H1 (cell line): ENCODE measurements at regions of chr12 and their contacts with region 1.

Region 1: DNA sequence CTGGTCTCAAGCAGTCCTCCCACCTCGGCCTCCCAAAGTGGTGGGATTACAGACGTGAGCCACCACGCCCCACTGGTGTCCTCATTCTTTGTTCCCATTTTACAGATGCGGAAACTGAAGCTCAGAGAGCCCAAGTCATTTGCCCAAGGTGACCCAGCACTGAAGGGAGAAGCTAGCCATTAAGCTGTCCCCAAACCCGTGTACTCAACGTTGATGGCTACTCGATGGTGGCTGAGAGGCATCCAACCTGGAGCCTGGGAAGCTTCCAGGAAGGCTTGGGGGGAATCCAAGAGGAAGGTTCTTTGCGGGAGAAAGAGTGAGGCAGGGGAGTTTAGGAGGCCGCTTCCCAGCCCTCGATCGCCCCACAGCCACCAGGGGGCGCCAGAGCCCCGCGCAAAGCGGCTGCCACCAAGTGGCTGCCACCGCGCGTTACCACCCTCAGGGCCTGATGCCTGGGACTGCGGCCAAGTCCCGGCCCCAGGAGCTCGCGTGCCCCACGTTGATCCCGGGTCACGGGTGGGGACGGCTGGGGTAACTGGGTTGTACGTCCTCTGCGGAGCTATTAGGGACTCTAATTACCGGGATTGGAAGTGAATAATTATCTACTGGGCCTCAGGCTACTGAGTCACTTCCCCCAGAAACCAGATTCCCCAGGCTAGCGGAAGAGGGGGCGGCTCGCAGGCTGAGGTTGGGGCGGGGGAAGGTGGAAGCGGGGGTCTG is 8.8 kb upstream of the SH2B3 start:
- DNase-seq: peak; percentile 60 to 98
- H3K4me3 ChIP-seq: no peak overlapping the region; a peak in 1 of 8 replicates
- H3K27ac ChIP-seq: no peak overlapping the region
- H3K4me1 ChIP-seq: no peaks in the 10 kb centered on the region
- H3K27me3 ChIP-seq: no peaks in the 10 kb centered on the region
- CTCF ChIP-seq: peak; percentile 92 to 100 (median 96)
- EP300 ChIP-seq: no peak
- POLR2A ChIP-seq: no peak
- RAD21 ChIP-seq: peak; percentile 95 to 97

Region 2: DNA sequence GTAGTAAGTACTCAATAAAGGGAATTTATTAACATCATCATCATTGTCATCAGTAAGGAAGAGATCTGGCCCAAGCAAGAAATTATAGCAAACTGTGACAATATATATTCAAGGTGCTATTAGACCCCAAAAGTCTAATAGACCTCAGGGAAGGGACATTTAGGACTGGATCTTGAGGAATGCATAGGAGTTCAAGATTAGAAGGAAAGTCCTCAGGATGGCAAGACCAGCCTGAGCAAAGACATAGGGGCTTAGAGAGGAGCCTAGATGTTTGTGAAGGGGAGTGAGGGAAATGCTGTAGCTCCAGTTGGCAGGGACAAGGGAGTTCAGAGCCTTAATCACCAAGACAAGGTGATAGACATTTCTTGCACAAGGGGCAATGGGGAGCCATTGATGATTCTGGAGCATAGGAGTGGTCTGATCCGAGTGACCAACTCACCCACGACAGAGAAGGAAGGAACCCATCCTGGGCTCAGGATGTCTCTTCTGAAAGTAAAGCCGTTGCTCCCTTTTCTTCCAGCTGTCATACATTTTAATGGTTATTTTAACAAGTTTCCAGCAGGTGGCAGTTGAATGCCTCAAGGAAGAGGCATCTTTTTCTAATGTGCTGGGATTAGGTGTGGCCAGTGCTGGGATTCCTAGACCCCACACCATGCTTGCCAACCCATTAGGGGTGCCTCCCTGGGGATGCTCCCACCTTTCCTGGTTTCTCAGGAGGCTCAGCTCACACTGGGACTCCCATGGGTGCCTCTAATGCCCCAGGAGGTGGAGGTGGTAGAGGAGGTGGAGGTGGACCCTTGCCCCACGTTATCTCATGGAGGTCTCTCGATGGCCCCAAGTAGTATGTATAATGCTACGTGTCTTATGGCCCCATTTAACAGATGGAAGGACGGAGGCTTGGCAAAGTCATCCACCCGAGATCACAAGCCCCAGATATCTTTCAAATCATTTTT is 65.8 kb before region 1 on chr12:
- CTCF ChIA-PET with region 1: interaction called, 12 read pairs
- POLR2A ChIA-PET with region 1: no interaction called
- DNase-seq: no peak
- H3K4me3 ChIP-seq: no peak overlapping the region
- H3K27ac ChIP-seq: no peak overlapping the region
- H3K4me1 ChIP-seq: peaks cover 0 to 2% (median 0%) of the 10 kb centered on the region in 4 experiments; a peak in 1 of 7 replicates
- H3K27me3 ChIP-seq: no peaks in the 10 kb centered on the region
- CTCF ChIP-seq: peak in 2 of 3 experiments; percentile 53 to 59; a peak in 3 of 4 replicates
- EP300 ChIP-seq: no peak
- POLR2A ChIP-seq: no peak
- RAD21 ChIP-seq: peak; percentile 60 to 71

Region 3: DNA sequence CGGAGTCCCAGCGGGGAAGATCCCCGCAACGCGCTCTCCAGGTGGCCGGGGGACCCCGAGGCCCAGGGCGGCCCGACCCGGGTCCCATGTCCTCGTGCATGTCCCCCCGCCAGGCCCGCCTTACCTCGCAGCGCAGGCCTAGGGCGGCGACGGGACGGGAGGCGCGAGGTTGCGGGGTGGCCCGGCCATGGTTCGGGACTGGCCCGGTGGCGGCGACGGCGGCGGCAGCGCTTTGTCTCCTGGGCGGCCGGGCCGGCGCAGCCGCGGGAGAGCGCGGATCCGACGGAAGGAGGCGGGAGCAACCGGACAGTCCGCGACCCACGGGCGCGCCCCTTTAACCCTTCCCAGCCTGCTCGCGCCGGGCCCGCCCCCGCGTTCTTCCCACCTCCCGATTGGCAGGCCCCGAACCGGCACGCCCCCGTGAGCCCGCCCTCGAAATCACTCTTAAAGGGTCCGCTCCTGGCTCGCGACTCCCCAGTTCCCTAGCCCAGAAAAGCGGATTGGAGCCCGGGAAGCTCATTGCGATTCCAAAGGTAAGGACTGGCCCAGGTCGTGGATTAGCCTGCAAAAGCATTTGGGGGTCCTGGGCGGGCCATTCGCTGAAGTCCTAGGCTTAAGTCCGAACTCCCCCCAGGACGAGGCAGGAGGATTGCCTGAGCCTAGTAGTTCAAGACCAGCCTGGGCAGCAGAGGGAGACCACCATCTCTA is 27.9 kb before region 1 on chr12 and contains the start of gene PHETA1:
- CTCF ChIA-PET with region 1: interaction called, 28 read pairs
- POLR2A ChIA-PET with region 1: interaction called, 5 read pairs
- DNase-seq: peak; percentile 39 to 95
- H3K4me3 ChIP-seq: peak within 1 kb of the TSS; percentile 75 to 83 (median 80)
- H3K27ac ChIP-seq: no peak within 1 kb of the TSS
- H3K4me1 ChIP-seq: peaks cover 0 to 9% (median 3%) of the 10 kb centered on the region in 4 experiments; a peak in 6 of 7 replicates
- H3K27me3 ChIP-seq: peaks cover 0 to 18% (median 7%) of the 10 kb centered on the region in 4 experiments; a peak in 4 of 7 replicates
- CTCF ChIP-seq: no peak
- EP300 ChIP-seq: no peak
- POLR2A ChIP-seq: peak in 1 of 2 experiments; percentile 48; a peak in 1 of 3 replicates
- RAD21 ChIP-seq: no peak
- total RNA-seq, gene PHETA1: 12.3 and 13.7 TPM in 2 replicates

Region 4: GRCh38 chr12:111412007-111412829 is 15.3 kb after region 1 on chr12:
- CTCF ChIA-PET with region 1: interaction called, 50 read pairs
- POLR2A ChIA-PET with region 1: interaction called, 7 read pairs
- DNase-seq: no peak
- H3K4me3 ChIP-seq: no peak overlapping the region
- H3K27ac ChIP-seq: peak overlapping the region; percentile 63; the same call in 1 of the 2 replicates
- H3K4me1 ChIP-seq: peaks cover 31 to 61% (median 45%) of the 10 kb centered on the region in 4 experiments
- H3K27me3 ChIP-seq: no peaks in the 10 kb centered on the region
- CTCF ChIP-seq: no peak
- EP300 ChIP-seq: 0 out of 3 replicates have a peak, but pooled peaks of 1 of the 2 experiments have one; percentile 31
- POLR2A ChIP-seq: no peak
- RAD21 ChIP-seq: no peak

Region 5: DNA sequence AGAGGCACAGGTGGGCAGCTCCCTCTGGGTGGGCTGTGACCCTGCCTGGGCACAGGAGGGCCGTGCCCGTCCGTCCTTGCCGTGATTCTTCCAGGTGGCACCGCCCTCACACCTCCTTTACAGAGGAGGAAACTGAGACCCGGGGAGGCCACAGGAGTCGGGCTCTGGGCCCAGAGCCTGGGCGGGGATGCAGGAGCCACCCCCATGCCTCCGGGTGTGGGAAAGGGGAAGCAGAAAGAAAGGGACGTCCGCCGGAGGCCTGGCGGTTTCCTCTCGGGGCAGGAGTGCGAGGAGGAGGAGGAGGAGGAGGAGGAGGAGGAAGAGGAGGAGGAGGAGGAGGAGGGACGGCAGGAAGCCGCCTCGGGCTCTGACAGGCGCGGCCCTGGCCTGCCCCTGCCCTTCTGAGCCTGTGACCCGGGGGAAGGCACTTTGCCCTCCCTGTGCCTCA is 31.9 kb after region 1 on chr12:
- CTCF ChIA-PET with region 1: interaction called, 838 read pairs
- POLR2A ChIA-PET with region 1: interaction called, 4 read pairs
- DNase-seq: no peak
- H3K4me3 ChIP-seq: no peak overlapping the region
- H3K27ac ChIP-seq: no peak overlapping the region
- H3K4me1 ChIP-seq: peaks cover 4 to 33% (median 20%) of the 10 kb centered on the region in 4 experiments
- H3K27me3 ChIP-seq: no peaks in the 10 kb centered on the region; a peak in 1 of 7 replicates
- CTCF ChIP-seq: no peak
- EP300 ChIP-seq: no peak
- POLR2A ChIP-seq: no peak
- RAD21 ChIP-seq: no peak

Region 6: GRCh38 chr12:111482462-111482861 is 85.6 kb after region 1 on chr12:
- CTCF ChIA-PET with region 1: interaction called, 24 read pairs
- POLR2A ChIA-PET with region 1: interaction called, 3 read pairs
- DNase-seq: no peak
- H3K4me3 ChIP-seq: no peak overlapping the region
- H3K27ac ChIP-seq: no peak overlapping the region
- H3K4me1 ChIP-seq: no peaks in the 10 kb centered on the region
- H3K27me3 ChIP-seq: no peaks in the 10 kb centered on the region
- CTCF ChIP-seq: peak in 1 of 3 experiments; percentile 28; a peak in 1 of 4 replicates
- EP300 ChIP-seq: no peak
- POLR2A ChIP-seq: no peak
- RAD21 ChIP-seq: no peak

Region 7: GRCh38 chr12:111529424-111530368 is 132.8 kb after region 1 on chr12:
- CTCF ChIA-PET with region 1: interaction called, 15 read pairs
- POLR2A ChIA-PET with region 1: no interaction called
- DNase-seq: peak; percentile 27 to 64
- H3K4me3 ChIP-seq: no peak overlapping the region
- H3K27ac ChIP-seq: no peak overlapping the region
- H3K4me1 ChIP-seq: peaks cover 0 to 2% (median 0%) of the 10 kb centered on the region in 4 experiments; a peak in 1 of 7 replicates
- H3K27me3 ChIP-seq: no peaks in the 10 kb centered on the region
- CTCF ChIP-seq: peak; percentile 53 to 73 (median 70)
- EP300 ChIP-seq: no peak
- POLR2A ChIP-seq: no peak
- RAD21 ChIP-seq: peak; percentile 57 to 69